ENCODE measurements at regions of chr19 and their contacts with region 1.

Region 1: DNA sequence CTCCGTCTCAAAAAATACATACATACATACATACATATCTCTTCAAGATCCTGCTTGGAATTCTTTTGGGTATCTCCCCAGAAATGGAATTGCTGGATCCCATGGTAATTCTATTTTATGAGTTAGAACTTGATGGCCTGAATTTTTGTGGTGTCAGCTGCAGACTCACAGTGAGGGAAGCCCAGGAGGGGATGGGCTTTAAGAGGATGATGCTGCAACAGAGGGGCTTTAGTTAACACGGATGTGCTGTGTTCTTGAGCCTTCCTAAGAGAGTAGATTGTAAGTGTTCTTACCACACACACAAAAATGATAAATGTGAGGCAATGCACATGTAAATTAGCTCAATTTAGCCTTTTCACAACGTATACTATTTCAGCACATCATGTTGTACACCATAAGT is 31.8 kb downstream of the CACNG6 start:
- DNase-seq: no peak
- ATAC-seq: no peak
- H3K4me3 ChIP-seq: no peak overlapping the region
- H3K4me1 ChIP-seq: peaks cover 3% of the 10 kb centered on the region
- CTCF ChIP-seq: no peak

Region 2: GRCh38 chr19:53844849-53845246 is 178.3 kb before region 1 on chr19:
- intact Hi-C with region 1: loop called in 1 of 2 experiments (anchors 5 kb)
- DNase-seq: no peak
- ATAC-seq: no peak
- H3K4me3 ChIP-seq: no peak overlapping the region
- H3K4me1 ChIP-seq: no peaks in the 10 kb centered on the region
- CTCF ChIP-seq: no peak

Region 3: DNA sequence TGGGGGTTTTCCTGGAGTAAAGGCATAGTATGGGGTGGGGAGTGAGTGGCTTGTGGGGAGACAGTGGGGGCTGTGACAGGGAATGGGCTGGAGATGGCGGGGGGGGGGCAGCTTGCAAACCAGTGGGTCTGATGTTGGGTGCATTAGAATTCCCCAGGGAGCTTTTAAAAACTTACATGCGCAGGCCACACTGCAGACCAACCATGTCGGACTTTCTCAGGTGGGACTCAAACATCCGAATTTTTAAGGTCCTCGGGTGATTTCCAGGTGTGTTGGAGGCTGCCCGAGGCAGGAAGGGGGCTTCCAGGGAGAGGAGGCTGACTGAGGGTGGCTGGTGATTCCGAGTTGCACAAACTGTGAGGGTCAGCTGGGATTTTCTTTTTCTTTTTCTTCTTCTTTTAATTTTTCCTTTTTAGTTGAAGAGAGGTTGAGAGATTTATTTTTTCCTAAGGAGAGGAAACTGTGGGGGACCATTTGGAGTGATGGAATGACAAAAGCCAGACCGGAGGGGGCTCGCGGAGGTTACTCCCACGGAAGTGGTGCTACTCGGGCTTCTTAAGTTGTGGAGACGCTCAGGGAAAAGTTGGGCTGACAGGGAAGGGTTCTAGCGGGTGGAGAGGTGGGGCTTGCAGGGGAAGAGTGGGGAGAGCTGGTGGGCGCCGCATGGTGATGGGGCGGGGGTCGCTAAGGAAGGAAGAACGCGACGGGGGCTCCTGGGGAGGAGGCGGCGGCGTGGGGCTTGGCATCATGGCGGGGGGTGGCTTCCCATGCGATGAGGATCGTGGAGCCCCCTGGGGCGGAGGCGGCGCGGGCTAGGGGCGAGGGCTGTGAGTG is 61.5 kb before region 1 on chr19:
- intact Hi-C with region 1: no loop called
- DNase-seq: no peak
- ATAC-seq: no peak
- H3K4me3 ChIP-seq: no peak overlapping the region
- H3K4me1 ChIP-seq: no peaks in the 10 kb centered on the region
- CTCF ChIP-seq: no peak

Region 4: DNA sequence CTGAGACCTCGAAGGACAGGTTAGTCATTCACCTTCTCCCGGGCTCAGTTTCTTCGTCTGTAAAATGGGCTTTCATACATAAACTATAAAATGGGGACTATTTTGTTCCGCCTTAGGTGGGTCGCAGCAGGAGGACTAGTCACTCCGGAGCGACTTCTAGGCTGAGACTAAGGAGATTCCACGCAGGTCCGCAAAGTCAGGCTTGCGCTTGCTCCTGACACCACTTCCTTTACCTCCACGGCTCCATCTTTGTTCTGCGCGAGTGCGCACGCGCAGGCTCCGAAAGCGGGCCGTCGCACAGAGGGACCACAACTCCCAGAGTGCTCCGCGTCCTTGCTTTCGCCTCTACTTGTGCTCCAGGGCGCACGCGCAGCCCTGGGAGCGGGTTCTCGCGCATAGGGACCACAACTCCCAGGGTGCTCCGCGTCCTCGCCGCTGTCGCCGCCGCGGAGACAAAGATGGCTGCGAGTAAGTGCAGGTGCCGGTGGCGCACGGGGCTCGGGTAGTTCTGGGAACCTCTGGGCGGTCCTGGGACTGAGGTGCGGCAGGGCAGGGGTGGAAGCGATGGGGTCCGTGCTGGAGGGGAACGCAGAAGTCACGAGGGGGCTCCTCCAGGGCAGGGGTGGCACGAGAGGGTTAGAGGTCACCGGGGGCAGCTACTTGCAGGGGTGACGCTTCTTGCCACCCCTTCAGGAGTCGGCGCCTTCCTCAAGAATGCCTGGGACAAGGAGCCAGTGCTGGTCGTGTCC is 79.4 kb after region 1 on chr19 and contains the start of gene NDUFA3:
- intact Hi-C with region 1: no loop called
- DNase-seq: peak; percentile 97 to 99 (median 98)
- ATAC-seq: peak; percentile 100
- H3K4me3 ChIP-seq: peak within 1 kb of the TSS; percentile 76
- H3K4me1 ChIP-seq: peaks cover 3% of the 10 kb centered on the region
- CTCF ChIP-seq: no peak
- total RNA-seq, gene NDUFA3: 93.4 to 155 (median 139) TPM

Region 5: GRCh38 chr19:54168174-54168917 is 145.2 kb after region 1 on chr19:
- intact Hi-C with region 1: no loop called
- DNase-seq: peak; percentile 93 to 99 (median 97)
- ATAC-seq: peak; percentile 72
- H3K4me3 ChIP-seq: no peak overlapping the region
- H3K4me1 ChIP-seq: peaks cover 19% of the 10 kb centered on the region
- CTCF ChIP-seq: peak; percentile 96